Naive thymus-derived CD4-positive, alpha-beta T cell (primary cell): ENCODE measurements at regions of chr11 and their contacts with region 1.

Region 1: DNA sequence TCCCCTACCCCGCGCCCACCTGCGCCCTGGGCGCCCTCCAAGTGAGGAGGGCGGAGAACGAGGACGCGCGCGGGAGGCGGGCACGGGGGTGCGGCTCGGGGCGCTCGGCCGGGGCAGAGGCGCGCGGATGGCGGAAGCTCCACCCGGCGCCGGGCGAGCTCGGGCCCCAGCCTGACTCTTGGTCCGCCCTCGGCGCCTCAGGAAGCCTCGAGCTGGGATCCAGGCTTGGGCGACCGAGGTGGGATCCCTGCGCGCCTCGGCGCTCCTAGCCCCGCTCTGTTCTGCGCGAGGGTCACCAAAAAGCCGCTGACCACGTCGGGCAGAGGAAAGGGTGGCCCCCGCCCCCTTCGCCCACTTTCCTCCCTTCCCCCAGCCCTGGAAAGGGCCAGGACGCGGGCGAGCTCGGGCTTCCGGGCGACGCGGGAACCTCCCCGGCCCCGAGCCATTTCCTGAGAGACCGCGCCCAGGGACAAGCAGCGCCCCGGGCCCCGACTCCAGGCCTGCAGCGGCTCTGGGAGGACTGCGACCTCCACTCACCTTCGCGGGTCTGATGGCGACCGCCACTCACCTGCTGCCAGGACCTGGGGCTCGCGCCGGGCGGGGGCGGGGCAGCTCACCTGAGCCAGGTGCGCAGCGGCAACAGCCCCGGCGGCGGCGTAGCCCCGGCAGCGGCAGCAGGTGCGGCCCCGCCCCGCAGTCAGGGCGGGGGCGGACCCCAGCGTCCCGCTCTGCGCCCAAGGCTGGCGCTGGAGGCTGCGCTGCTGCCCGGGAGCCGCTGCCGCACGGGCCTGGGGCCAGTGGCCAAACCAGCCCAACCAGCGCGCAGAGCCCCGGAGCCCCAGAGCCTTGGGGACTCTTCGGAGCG is 2.2 kb upstream of the SIGIRR start:
- DNase-seq: peak; percentile 34 to 71 (median 47)
- ATAC-seq: peak; percentile 38
- H3K4me3 ChIP-seq: peak overlapping the region; percentile 92
- H3K4me3 Mint-ChIP-seq: peak overlapping the region; percentile 48 to 100 (median 96)
- H3K27ac ChIP-seq: peak overlapping the region; percentile 75
- H3K27ac Mint-ChIP-seq: peak overlapping the region in 4 of 9 donors; percentile 68 to 78 (median 70)
- H3K4me1 ChIP-seq: peaks cover 11 to 21% of the 10 kb centered on the region in 2 donors
- H3K4me1 Mint-ChIP-seq: peaks cover 10 to 37% (median 17%) of the 10 kb centered on the region in 7 donors
- H3K27me3 ChIP-seq: no peaks in the 10 kb centered on the region
- H3K27me3 Mint-ChIP-seq: no peaks in the 10 kb centered on the region

Region 2: DNA sequence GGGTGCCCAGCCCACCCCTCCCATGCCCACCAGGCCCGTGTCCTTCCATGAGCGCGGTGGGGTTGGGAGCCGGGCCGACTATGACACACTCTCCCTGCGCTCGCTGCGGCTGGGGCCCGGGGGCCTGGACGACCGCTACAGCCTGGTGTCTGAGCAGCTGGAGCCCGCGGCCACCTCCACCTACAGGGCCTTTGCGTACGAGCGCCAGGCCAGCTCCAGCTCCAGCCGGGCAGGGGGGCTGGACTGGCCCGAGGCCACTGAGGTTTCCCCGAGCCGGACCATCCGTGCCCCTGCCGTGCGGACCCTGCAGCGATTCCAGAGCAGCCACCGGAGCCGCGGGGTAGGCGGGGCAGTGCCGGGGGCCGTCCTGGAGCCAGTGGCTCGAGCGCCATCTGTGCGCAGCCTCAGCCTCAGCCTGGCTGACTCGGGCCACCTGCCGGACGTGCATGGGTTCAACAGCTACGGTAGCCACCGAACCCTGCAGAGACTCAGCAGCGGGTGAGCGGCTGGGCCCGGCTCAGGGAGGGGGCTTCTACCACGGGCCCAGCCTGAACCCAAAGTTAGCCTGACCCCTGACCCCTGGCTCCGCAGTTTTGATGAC is 19.9 kb before region 1 on chr11:
- CTCF ChIA-PET with region 1: no interaction called
- POLR2A ChIA-PET with region 1: interaction called, 11 read pairs
- intact Hi-C with region 1: no loop called
- DNase-seq: peak in 1 of 9 donors; percentile 46
- ATAC-seq: peak; percentile 77
- H3K4me3 ChIP-seq: no peak overlapping the region
- H3K4me3 Mint-ChIP-seq: peak overlapping the region in 4 of 10 donors; percentile 29 to 69 (median 46)
- H3K27ac ChIP-seq: no peak overlapping the region
- H3K27ac Mint-ChIP-seq: no peak overlapping the region
- H3K4me1 ChIP-seq: no peaks in the 10 kb centered on the region
- H3K4me1 Mint-ChIP-seq: peaks cover 0 to 11% (median 0%) of the 10 kb centered on the region in 7 donors
- H3K27me3 ChIP-seq: no peaks in the 10 kb centered on the region
- H3K27me3 Mint-ChIP-seq: peaks cover 0 to 9% (median 0%) of the 10 kb centered on the region in 5 donors

Region 3: DNA sequence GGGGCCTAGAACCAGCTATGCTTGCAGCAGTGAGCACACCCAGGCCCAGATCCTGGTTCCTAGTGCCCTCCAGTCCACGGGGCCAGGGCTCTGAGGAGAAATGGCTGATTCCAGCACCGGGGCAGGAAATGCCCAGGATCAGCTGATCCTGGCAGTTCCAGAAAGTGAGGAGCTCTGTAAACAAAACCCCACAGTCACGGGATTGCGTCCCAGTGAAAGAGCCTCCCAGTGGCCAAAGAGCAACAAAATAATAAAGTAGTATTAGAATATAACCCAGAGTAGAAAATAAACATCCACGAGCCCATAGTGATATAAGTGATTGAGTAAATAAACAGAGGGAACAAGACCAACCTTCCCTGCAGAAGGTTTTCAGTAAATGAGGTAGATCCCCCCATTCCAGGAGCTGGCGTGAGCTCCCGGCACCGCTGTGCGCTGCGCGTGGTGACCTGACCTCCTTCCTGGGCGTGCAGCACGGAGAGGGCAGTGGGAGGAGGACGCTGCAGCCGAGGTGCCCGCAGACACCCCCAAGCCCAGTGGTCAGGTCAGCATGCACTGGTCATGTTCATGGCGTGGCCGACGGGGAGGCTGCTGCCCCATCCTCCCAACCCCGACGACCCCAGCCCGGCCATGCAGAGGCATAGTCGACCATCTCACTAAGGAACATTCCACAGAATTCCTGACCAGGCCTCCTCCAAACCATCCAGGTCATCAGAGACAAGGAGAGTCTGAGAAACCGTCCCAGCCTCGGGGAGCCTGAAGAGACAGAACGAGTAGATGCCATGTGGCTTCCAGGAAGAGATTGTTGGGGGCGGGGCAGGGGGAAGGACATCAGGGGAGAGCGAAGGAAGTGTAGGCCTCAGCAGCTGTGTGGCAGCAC is 52.9 kb after region 1 on chr11:
- CTCF ChIA-PET with region 1: no interaction called
- POLR2A ChIA-PET with region 1: no interaction called
- intact Hi-C with region 1: no loop called
- DNase-seq: no peak
- ATAC-seq: no peak
- H3K4me3 ChIP-seq: no peak overlapping the region
- H3K4me3 Mint-ChIP-seq: peak overlapping the region in 1 of 10 donors; percentile 6
- H3K27ac ChIP-seq: no peak overlapping the region
- H3K27ac Mint-ChIP-seq: no peak overlapping the region
- H3K4me1 ChIP-seq: no peaks in the 10 kb centered on the region
- H3K4me1 Mint-ChIP-seq: peaks cover 0 to 6% (median 0%) of the 10 kb centered on the region in 7 donors
- H3K27me3 ChIP-seq: no peaks in the 10 kb centered on the region
- H3K27me3 Mint-ChIP-seq: no peaks in the 10 kb centered on the region